ENCODE measurements at regions of chr14 and their contacts with region 1.

Region 1: DNA sequence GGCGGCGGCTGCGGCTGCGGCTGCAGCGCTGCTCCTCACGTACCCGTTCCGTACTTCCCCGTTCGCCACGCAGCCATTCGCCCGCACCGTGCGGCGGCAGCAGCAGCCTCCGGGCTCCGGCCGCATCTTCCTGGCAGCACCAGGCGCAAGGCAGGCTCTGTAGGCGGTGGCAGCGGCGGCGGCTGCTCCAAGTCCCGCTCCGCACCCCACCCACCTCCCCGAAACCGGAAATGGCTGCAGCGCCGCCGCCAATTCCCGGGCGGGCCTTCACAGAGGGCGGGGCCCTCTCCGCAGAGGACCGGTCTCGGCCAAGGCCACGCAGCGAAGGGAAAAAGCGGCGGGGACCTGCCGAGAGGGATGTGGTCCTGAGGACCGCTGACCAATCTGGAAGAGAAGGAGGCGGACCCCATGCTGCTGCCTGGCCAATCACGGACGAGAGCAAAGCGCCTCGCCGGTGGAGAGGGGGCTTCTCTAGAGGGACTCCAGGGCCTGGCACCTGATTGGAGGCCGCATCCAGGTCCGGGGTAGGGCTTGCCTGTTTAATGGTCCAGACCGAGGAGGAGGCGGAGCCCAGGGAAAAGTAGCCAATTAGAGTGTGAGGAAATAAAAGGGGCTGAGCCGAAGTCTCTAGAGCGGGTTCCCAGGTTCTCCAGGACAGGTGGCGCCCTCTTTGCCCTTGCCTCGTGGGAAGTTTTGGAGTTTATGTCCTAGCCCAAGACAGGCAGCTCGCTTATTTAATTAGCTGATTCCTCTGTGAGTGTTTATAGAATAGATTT is at the start of gene SPTLC2:
- DNase-seq: peak; percentile 91 to 99 (median 94)
- ATAC-seq: peak; percentile 97
- H3K4me3 ChIP-seq: peak within 1 kb of the TSS; percentile 65
- H3K4me3 Mint-ChIP-seq: peak within 1 kb of the TSS; percentile 97
- H3K27ac ChIP-seq: peak within 1 kb of the TSS; percentile 19 to 56
- H3K27ac Mint-ChIP-seq: peak within 1 kb of the TSS; percentile 78
- H3K4me1 ChIP-seq: peaks cover 15% of the 10 kb centered on the region
- H3K4me1 Mint-ChIP-seq: peaks cover 48% of the 10 kb centered on the region
- H3K27me3 ChIP-seq: no peaks in the 10 kb centered on the region
- H3K27me3 Mint-ChIP-seq: no peaks in the 10 kb centered on the region
- CTCF ChIP-seq: no peak
- total RNA-seq, gene SPTLC2: 13.0 to 14.5 TPM

Region 2: DNA sequence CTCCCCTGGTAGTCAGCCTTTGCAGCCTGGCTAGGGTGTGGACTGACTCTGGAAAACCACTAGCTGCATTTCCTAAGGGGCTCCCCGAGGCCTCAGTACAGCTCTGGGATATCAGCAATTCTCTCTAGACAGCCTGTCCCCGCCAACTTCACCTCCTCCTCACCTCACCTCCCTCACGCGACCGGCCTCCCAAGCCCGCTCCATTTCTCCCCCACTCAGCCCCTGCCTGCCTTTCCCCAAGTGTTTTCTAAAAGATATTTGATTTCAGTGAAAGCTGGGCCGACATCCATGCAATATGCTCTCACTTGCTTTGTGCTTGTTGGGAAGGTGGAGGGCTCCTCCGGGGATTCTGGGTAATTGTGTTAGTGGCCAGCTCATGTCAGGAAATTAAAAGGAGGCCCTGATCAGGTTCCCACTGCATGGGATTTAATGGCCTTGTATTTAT is 1148.9 kb before region 1 on chr14:
- CTCF ChIA-PET with region 1: no interaction called
- POLR2A ChIA-PET with region 1: no interaction called
- intact Hi-C with region 1: no loop called
- DNase-seq: no peak
- ATAC-seq: no peak
- H3K4me3 ChIP-seq: no peak overlapping the region
- H3K4me3 Mint-ChIP-seq: no peak overlapping the region
- H3K27ac ChIP-seq: no peak overlapping the region
- H3K27ac Mint-ChIP-seq: no peak overlapping the region
- H3K4me1 ChIP-seq: no peaks in the 10 kb centered on the region
- H3K4me1 Mint-ChIP-seq: no peaks in the 10 kb centered on the region
- H3K27me3 ChIP-seq: peaks cover 0 to 2% of the 10 kb centered on the region in 2 experiments
- H3K27me3 Mint-ChIP-seq: peaks cover 15% of the 10 kb centered on the region
- CTCF ChIP-seq: no peak

Region 3: GRCh38 chr14:77212943-77213678 is 403.5 kb before region 1 on chr14:
- CTCF ChIA-PET with region 1: no interaction called
- POLR2A ChIA-PET with region 1: no interaction called
- intact Hi-C with region 1: no loop called
- DNase-seq: peak in 5 of 14 experiments; percentile 4 to 32 (median 6)
- ATAC-seq: no peak
- H3K4me3 ChIP-seq: no peak overlapping the region
- H3K4me3 Mint-ChIP-seq: no peak overlapping the region
- H3K27ac ChIP-seq: no peak overlapping the region
- H3K27ac Mint-ChIP-seq: no peak overlapping the region
- H3K4me1 ChIP-seq: no peaks in the 10 kb centered on the region
- H3K4me1 Mint-ChIP-seq: no peaks in the 10 kb centered on the region
- H3K27me3 ChIP-seq: peaks cover 0 to 8% of the 10 kb centered on the region in 2 experiments
- H3K27me3 Mint-ChIP-seq: peaks cover 45% of the 10 kb centered on the region
- CTCF ChIP-seq: no peak

Region 4: DNA sequence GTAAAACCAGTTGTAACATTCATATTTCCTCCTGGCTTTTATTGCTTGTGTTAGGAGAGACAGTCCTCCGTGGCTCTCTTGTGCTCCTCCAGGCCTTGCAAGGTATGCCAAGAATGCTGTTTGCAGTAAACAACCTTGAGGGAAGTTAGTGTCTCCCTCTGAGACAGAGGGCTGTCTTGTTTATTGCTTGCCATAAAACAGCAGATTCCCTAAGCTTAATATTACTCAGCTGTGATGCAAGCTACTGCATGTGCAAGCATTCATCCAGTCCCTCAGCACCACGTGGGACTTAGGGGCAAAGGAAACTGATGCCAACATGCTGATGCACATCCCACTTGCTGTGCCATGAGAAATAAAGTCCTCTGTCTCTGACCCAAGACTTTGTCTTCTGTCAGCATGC is 302.6 kb before region 1 on chr14:
- CTCF ChIA-PET with region 1: no interaction called
- POLR2A ChIA-PET with region 1: no interaction called
- intact Hi-C with region 1: loop called in 1 of 2 experiments (anchors 5 kb)
- DNase-seq: no peak
- ATAC-seq: no peak
- H3K4me3 ChIP-seq: no peak overlapping the region
- H3K4me3 Mint-ChIP-seq: no peak overlapping the region
- H3K27ac ChIP-seq: no peak overlapping the region
- H3K27ac Mint-ChIP-seq: no peak overlapping the region
- H3K4me1 ChIP-seq: peaks cover 7% of the 10 kb centered on the region
- H3K4me1 Mint-ChIP-seq: peaks cover 5% of the 10 kb centered on the region
- H3K27me3 ChIP-seq: no peaks in the 10 kb centered on the region
- H3K27me3 Mint-ChIP-seq: no peaks in the 10 kb centered on the region
- CTCF ChIP-seq: no peak

Region 5: GRCh38 chr14:77457522-77458290 is 158.9 kb before region 1 on chr14 and contains the starts of genes AHSA1 and VIPAS39:
- CTCF ChIA-PET with region 1: no interaction called
- POLR2A ChIA-PET with region 1: no interaction called
- intact Hi-C with region 1: loop called (anchors 2 to 5 kb)
- DNase-seq: peak; percentile 86 to 99 (median 88)
- ATAC-seq: peak; percentile 94
- H3K4me3 ChIP-seq: peak within 1 kb of the TSS; percentile 98
- H3K4me3 Mint-ChIP-seq: peak within 1 kb of the TSS; percentile 100
- H3K27ac ChIP-seq: peak within 1 kb of the TSS; percentile 79 to 96
- H3K27ac Mint-ChIP-seq: peak within 1 kb of the TSS; percentile 90
- H3K4me1 ChIP-seq: peaks cover 31% of the 10 kb centered on the region
- H3K4me1 Mint-ChIP-seq: peaks cover 48% of the 10 kb centered on the region
- H3K27me3 ChIP-seq: no peaks in the 10 kb centered on the region
- H3K27me3 Mint-ChIP-seq: no peaks in the 10 kb centered on the region
- CTCF ChIP-seq: no peak
- total RNA-seq, gene AHSA1: 28.7 to 33.7 TPM
- total RNA-seq, gene VIPAS39: 7.6 to 8.7 TPM

Region 6: GRCh38 chr14:77593501-77593961 is 23.1 kb before region 1 on chr14:
- CTCF ChIA-PET with region 1: interaction called, 6 read pairs
- POLR2A ChIA-PET with region 1: interaction called, 7 read pairs
- intact Hi-C with region 1: loop called in 1 of 2 experiments (anchors 1 kb)
- DNase-seq: peak in 3 of 14 experiments; percentile 58 to 82 (median 58)
- ATAC-seq: peak; percentile 91
- H3K4me3 ChIP-seq: peak overlapping the region; percentile 17
- H3K4me3 Mint-ChIP-seq: peak overlapping the region; percentile 86
- H3K27ac ChIP-seq: peak overlapping the region; percentile 13 to 52
- H3K27ac Mint-ChIP-seq: peak overlapping the region; percentile 83
- H3K4me1 ChIP-seq: peaks cover 31% of the 10 kb centered on the region
- H3K4me1 Mint-ChIP-seq: peaks cover 62% of the 10 kb centered on the region
- H3K27me3 ChIP-seq: no peaks in the 10 kb centered on the region
- H3K27me3 Mint-ChIP-seq: no peaks in the 10 kb centered on the region
- CTCF ChIP-seq: no peak

Region 7: GRCh38 chr14:77641534-77642341 is 25.1 kb after region 1 on chr14:
- CTCF ChIA-PET with region 1: interaction called, 3 read pairs
- POLR2A ChIA-PET with region 1: no interaction called
- intact Hi-C with region 1: loop called in 1 of 2 experiments (anchors 2 kb)
- DNase-seq: peak; percentile 39 to 81 (median 60)
- ATAC-seq: peak; percentile 85
- H3K4me3 ChIP-seq: peak overlapping the region; percentile 61
- H3K4me3 Mint-ChIP-seq: peak overlapping the region; percentile 93
- H3K27ac ChIP-seq: peak overlapping the region; percentile 25 to 53
- H3K27ac Mint-ChIP-seq: peak overlapping the region; percentile 92
- H3K4me1 ChIP-seq: peaks cover 9% of the 10 kb centered on the region
- H3K4me1 Mint-ChIP-seq: peaks cover 15% of the 10 kb centered on the region
- H3K27me3 ChIP-seq: no peaks in the 10 kb centered on the region
- H3K27me3 Mint-ChIP-seq: no peaks in the 10 kb centered on the region
- CTCF ChIP-seq: no peak

Region 8: GRCh38 chr14:77714926-77715325 is 98.3 kb after region 1 on chr14:
- CTCF ChIA-PET with region 1: no interaction called
- POLR2A ChIA-PET with region 1: no interaction called
- intact Hi-C with region 1: no loop called
- DNase-seq: no peak
- ATAC-seq: no peak
- H3K4me3 ChIP-seq: no peak overlapping the region
- H3K4me3 Mint-ChIP-seq: no peak overlapping the region
- H3K27ac ChIP-seq: no peak overlapping the region
- H3K27ac Mint-ChIP-seq: peak overlapping the region; percentile 2
- H3K4me1 ChIP-seq: no peaks in the 10 kb centered on the region
- H3K4me1 Mint-ChIP-seq: peaks cover 13% of the 10 kb centered on the region
- H3K27me3 ChIP-seq: no peaks in the 10 kb centered on the region
- H3K27me3 Mint-ChIP-seq: no peaks in the 10 kb centered on the region
- CTCF ChIP-seq: no peak

Region 9: GRCh38 chr14:77760381-77761246 is 144.0 kb after region 1 on chr14 and contains the start of gene SNW1:
- CTCF ChIA-PET with region 1: no interaction called
- POLR2A ChIA-PET with region 1: no interaction called
- intact Hi-C with region 1: loop called in 1 of 2 experiments (anchors 5 kb)
- DNase-seq: peak; percentile 79 to 98 (median 87)
- ATAC-seq: peak; percentile 90
- H3K4me3 ChIP-seq: peak within 1 kb of the TSS; percentile 59
- H3K4me3 Mint-ChIP-seq: peak within 1 kb of the TSS; percentile 99
- H3K27ac ChIP-seq: peak within 1 kb of the TSS; percentile 89 to 94
- H3K27ac Mint-ChIP-seq: peak within 1 kb of the TSS; percentile 99
- H3K4me1 ChIP-seq: peaks cover 42% of the 10 kb centered on the region
- H3K4me1 Mint-ChIP-seq: peaks cover 45% of the 10 kb centered on the region
- H3K27me3 ChIP-seq: no peaks in the 10 kb centered on the region
- H3K27me3 Mint-ChIP-seq: no peaks in the 10 kb centered on the region
- CTCF ChIP-seq: no peak
- total RNA-seq, gene SNW1: 131 to 136 TPM

Measured in CD4-positive, alpha-beta T cell (primary cell).